WTC11 (cell line): ENCODE measurements at regions of chr6 and their contacts with region 1.

Region 1: GRCh38 chr6:165729307-165729936 is 66.4 kb upstream of the PDE10A start:
- DNase-seq: peak; percentile 71
- ATAC-seq: peak; percentile 67
- H3K4me3 Mint-ChIP-seq: no peak overlapping the region
- H3K27ac Mint-ChIP-seq: no peak overlapping the region
- H3K4me1 Mint-ChIP-seq: peaks cover 10% of the 10 kb centered on the region
- H3K27me3 Mint-ChIP-seq: no peaks in the 10 kb centered on the region; the same call in 1 of the 2 replicates
- CTCF ChIP-seq: peak; percentile 83

Region 2: GRCh38 chr6:165850434-165851019 is 121.1 kb after region 1 on chr6:
- CTCF ChIA-PET with region 1: interaction called, 35 read pairs
- POLR2A ChIA-PET with region 1: no interaction called
- DNase-seq: peak; percentile 77
- ATAC-seq: peak; percentile 33; the same call in 1 of the 2 replicates
- H3K4me3 Mint-ChIP-seq: peak overlapping the region; percentile 46; the same call in 1 of the 2 replicates
- H3K27ac Mint-ChIP-seq: no peak overlapping the region
- H3K4me1 Mint-ChIP-seq: peaks cover 38% of the 10 kb centered on the region
- H3K27me3 Mint-ChIP-seq: peaks cover 49% of the 10 kb centered on the region
- CTCF ChIP-seq: peak; percentile 93